ENCODE measurements at regions of chr1 and their contacts with region 1.

Region 1: GRCh38 chr1:54810100-54810942 is 9.2 kb upstream of the TTC22 start:
- DNase-seq: peak; percentile 46 to 81 (median 64)
- ATAC-seq: peak; percentile 76
- H3K4me3 ChIP-seq: no peak overlapping the region
- H3K4me3 Mint-ChIP-seq: no peak overlapping the region
- H3K27ac ChIP-seq: no peak overlapping the region
- H3K27ac Mint-ChIP-seq: no peak overlapping the region
- H3K4me1 ChIP-seq: peaks cover 4% of the 10 kb centered on the region
- H3K4me1 Mint-ChIP-seq: no peaks in the 10 kb centered on the region
- H3K27me3 ChIP-seq: no peaks in the 10 kb centered on the region
- H3K27me3 Mint-ChIP-seq: no peaks in the 10 kb centered on the region
- CTCF ChIP-seq: peak; percentile 69

Region 2: DNA sequence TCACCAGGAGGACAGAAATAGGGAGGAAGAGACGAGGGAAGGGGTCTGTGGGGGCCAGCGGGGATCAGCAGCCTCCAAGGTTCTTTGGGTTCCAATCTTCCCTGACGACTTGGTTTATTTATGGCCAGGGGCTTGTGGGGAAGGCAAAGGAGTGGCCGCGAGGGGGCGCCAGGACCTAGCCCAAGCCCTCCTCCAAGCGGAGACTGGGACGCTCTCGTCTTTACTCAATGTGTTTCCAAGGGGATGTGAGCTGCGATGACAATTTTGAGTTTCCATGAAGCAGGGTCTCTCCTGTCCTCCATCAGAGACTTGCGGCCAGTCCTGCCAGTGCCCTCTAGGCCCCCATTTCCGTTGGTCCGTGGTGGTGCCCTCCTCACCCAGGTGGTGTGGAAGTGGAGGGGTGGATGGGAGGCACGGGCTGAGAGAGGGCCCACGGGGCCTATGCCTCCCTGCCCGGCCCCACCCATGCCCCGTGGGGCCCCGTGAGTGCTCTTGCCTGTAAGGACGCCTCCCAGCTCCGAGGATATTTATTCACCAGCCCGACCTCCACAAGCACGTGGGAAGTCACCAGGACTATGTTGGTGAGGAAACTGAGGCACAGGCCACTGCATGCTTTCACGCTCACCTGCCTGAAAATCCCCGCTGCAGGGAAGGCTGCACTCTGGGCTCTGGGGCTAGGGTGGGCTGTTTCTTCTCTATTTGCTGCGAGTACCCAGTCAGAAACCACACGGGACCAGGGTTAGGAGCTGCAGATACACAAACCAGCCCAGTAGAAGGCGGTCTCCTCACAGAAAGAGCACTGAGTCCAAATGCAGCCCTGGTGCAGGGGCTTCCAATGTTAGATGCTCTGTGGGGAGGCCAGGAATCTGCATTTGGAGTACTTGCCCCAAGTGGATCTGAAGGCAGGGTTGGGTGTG is 1324.6 kb before region 1 on chr1:
- CTCF ChIA-PET with region 1: no interaction called
- POLR2A ChIA-PET with region 1: no interaction called
- intact Hi-C with region 1: loop called in 1 of 2 experiments (anchors 5 kb)
- DNase-seq: peak; percentile 38 to 79 (median 67)
- ATAC-seq: peak; percentile 44
- H3K4me3 ChIP-seq: no peak overlapping the region
- H3K4me3 Mint-ChIP-seq: no peak overlapping the region
- H3K27ac ChIP-seq: no peak overlapping the region
- H3K27ac Mint-ChIP-seq: no peak overlapping the region
- H3K4me1 ChIP-seq: no peaks in the 10 kb centered on the region
- H3K4me1 Mint-ChIP-seq: peaks cover 5% of the 10 kb centered on the region
- H3K27me3 ChIP-seq: peaks cover 2 to 6% of the 10 kb centered on the region in 2 experiments
- H3K27me3 Mint-ChIP-seq: peaks cover 21% of the 10 kb centered on the region
- CTCF ChIP-seq: peak; percentile 62

Region 3: DNA sequence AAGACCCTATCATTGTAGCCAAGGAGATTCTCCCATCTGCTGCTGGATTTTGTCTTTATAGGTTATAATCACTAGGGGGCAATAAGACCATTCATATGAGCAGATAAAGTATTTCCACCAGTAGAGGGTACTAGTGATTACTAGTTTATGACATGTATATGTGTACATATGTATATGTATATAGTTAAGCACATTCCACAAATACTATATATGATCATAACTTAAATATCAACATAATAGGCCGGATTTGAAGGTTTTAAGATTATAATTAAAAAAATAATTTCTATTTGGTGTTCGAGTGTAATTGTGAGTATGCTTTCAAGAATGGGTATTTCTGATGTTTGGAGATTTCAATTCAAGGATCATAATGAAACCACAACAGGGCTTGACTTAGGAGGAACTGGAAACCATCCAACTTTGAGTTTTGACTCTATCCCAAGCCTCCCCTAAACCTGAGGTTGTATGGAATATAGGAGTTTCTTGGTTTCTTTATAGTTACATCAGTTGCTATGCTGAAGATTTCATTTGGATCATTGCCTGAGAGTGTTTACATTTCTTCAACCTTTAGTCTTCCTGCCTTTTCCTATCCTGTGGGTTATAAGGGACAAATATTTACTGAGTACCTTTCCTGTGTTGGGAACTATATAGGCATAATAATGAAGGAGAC is 740.0 kb before region 1 on chr1:
- CTCF ChIA-PET with region 1: interaction called, 9 read pairs
- POLR2A ChIA-PET with region 1: no interaction called
- intact Hi-C with region 1: loop called (anchors 1 kb)
- DNase-seq: peak in 2 of 9 experiments; percentile 62 to 75
- ATAC-seq: peak; percentile 89
- H3K4me3 ChIP-seq: no peak overlapping the region
- H3K4me3 Mint-ChIP-seq: no peak overlapping the region
- H3K27ac ChIP-seq: no peak overlapping the region
- H3K27ac Mint-ChIP-seq: no peak overlapping the region
- H3K4me1 ChIP-seq: no peaks in the 10 kb centered on the region
- H3K4me1 Mint-ChIP-seq: no peaks in the 10 kb centered on the region
- H3K27me3 ChIP-seq: no peaks in the 10 kb centered on the region
- H3K27me3 Mint-ChIP-seq: no peaks in the 10 kb centered on the region
- CTCF ChIP-seq: peak; percentile 85

Region 4: GRCh38 chr1:54121482-54122134 is 688.7 kb before region 1 on chr1:
- CTCF ChIA-PET with region 1: interaction called, 3 read pairs
- POLR2A ChIA-PET with region 1: no interaction called
- intact Hi-C with region 1: loop called (anchors 1 to 5 kb)
- DNase-seq: peak; percentile 41 to 81 (median 70)
- ATAC-seq: peak; percentile 94
- H3K4me3 ChIP-seq: no peak overlapping the region
- H3K4me3 Mint-ChIP-seq: peak overlapping the region; percentile 59
- H3K27ac ChIP-seq: no peak overlapping the region
- H3K27ac Mint-ChIP-seq: no peak overlapping the region
- H3K4me1 ChIP-seq: peaks cover 5% of the 10 kb centered on the region
- H3K4me1 Mint-ChIP-seq: peaks cover 6% of the 10 kb centered on the region
- H3K27me3 ChIP-seq: peaks cover 0 to 11% of the 10 kb centered on the region in 2 experiments
- H3K27me3 Mint-ChIP-seq: peaks cover 3% of the 10 kb centered on the region
- CTCF ChIP-seq: peak; percentile 53

Region 5: DNA sequence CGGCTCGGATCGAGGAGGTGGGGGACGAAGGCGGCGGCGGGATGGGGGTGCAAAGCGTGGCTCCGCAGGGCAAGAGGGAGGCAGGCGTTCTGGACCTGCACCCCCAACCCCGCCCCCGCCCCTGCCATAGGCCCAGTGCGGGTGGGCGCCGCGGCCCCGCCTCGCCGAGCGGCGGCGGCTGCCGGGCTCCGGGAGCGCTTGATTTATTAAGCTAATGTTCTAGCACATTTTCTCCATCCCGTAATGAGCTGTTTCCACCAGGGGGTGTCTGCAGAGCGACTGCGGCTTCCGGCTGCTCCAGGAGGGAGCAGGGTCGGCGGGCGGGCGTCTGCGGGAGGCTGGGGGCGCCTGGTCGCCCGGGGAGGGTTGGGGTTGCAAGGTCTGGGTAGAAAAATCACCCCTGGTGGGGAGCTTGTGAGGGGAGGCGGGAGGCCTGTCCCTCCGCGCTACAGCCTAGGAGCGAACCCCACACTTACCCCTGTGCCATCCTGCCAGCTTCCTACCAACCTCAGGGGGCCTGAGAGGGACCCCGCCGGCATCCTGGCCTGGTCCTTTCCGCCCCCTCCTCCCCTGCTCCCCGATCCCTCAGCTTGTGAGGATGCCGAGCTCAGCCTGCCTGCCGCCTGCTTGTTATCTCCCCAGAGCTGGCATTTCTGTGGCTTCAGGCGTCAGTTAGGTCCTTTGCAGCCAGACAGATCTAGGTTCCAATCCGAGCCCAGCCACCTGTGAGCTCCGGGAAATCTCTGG is 310.8 kb before region 1 on chr1:
- CTCF ChIA-PET with region 1: interaction called, 8 read pairs
- POLR2A ChIA-PET with region 1: no interaction called
- intact Hi-C with region 1: loop called (anchors 1 to 2 kb)
- DNase-seq: peak in 5 of 9 experiments; percentile 42 to 64 (median 54)
- ATAC-seq: peak; percentile 73
- H3K4me3 ChIP-seq: peak overlapping the region; percentile 22 to 43
- H3K4me3 Mint-ChIP-seq: peak overlapping the region; percentile 75
- H3K27ac ChIP-seq: no peak overlapping the region
- H3K27ac Mint-ChIP-seq: no peak overlapping the region
- H3K4me1 ChIP-seq: peaks cover 12% of the 10 kb centered on the region
- H3K4me1 Mint-ChIP-seq: peaks cover 8% of the 10 kb centered on the region
- H3K27me3 ChIP-seq: peaks cover 9 to 10% of the 10 kb centered on the region in 2 experiments
- H3K27me3 Mint-ChIP-seq: peaks cover 36% of the 10 kb centered on the region
- CTCF ChIP-seq: peak; percentile 34

Region 6: DNA sequence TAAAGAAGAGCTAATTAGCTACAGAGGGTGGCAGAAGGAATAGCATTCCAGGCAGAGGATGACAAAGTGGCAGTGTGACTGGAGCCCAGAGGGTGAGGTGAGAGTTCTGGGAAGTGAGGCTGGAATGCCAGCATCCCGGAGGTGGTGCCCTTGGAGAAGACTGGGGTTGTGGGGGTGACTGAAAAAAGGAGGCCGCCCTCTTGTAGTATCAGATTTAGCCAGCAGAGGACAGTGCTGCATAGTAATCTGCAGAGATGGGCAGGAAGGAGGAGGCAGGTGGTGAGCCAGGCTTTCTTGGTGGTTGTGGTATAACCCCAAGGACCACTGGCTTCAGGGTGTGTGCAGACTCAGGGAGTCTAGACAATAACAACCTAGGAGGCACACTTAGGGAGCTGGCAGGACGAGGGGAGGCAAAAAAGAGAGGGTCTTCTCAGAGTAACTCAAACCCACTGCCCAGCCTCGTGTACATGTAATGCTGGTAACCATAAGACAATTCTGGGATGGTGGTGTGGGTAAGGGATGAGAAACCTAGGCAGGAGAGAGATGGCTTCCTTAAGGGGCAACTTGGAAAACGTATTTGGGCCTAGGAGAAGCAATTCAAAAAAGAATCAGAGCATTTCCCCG is 138.2 kb before region 1 on chr1:
- CTCF ChIA-PET with region 1: interaction called, 9 read pairs
- POLR2A ChIA-PET with region 1: interaction called, 3 read pairs
- intact Hi-C with region 1: loop called in 1 of 2 experiments (anchors 1 kb)
- DNase-seq: peak; percentile 39 to 77 (median 63)
- ATAC-seq: peak; percentile 85
- H3K4me3 ChIP-seq: no peak overlapping the region
- H3K4me3 Mint-ChIP-seq: no peak overlapping the region
- H3K27ac ChIP-seq: no peak overlapping the region
- H3K27ac Mint-ChIP-seq: no peak overlapping the region
- H3K4me1 ChIP-seq: no peaks in the 10 kb centered on the region
- H3K4me1 Mint-ChIP-seq: no peaks in the 10 kb centered on the region
- H3K27me3 ChIP-seq: no peaks in the 10 kb centered on the region
- H3K27me3 Mint-ChIP-seq: no peaks in the 10 kb centered on the region
- CTCF ChIP-seq: peak; percentile 69

Region 7: GRCh38 chr1:54724771-54725170 is 85.5 kb before region 1 on chr1:
- CTCF ChIA-PET with region 1: no interaction called
- POLR2A ChIA-PET with region 1: no interaction called
- intact Hi-C with region 1: no loop called
- DNase-seq: no peak
- ATAC-seq: no peak
- H3K4me3 ChIP-seq: no peak overlapping the region
- H3K4me3 Mint-ChIP-seq: no peak overlapping the region
- H3K27ac ChIP-seq: no peak overlapping the region
- H3K27ac Mint-ChIP-seq: no peak overlapping the region
- H3K4me1 ChIP-seq: no peaks in the 10 kb centered on the region
- H3K4me1 Mint-ChIP-seq: no peaks in the 10 kb centered on the region
- H3K27me3 ChIP-seq: no peaks in the 10 kb centered on the region
- H3K27me3 Mint-ChIP-seq: no peaks in the 10 kb centered on the region
- CTCF ChIP-seq: no peak

Measured in CD8-positive, alpha-beta T cell (primary cell).